GM12878 (cell line): ENCODE measurements at regions of chr2 and their contacts with region 1.

Region 1: GRCh38 chr2:58460670-58461069 is 219.5 kb upstream of the FANCL start:
- DNase-seq: no peak
- ATAC-seq: no peak
- H3K4me3 ChIP-seq: no peak overlapping the region
- H3K27ac ChIP-seq: no peak overlapping the region
- H3K4me1 ChIP-seq: no peaks in the 10 kb centered on the region
- H3K27me3 ChIP-seq: no peaks in the 10 kb centered on the region
- CTCF ChIP-seq: no peak
- EP300 ChIP-seq: no peak
- POLR2A ChIP-seq: no peak
- RAD21 ChIP-seq: no peak

Region 2: GRCh38 chr2:58448065-58448507 is 12.6 kb before region 1 on chr2:
- CTCF ChIA-PET with region 1: interaction called, 4 read pairs
- POLR2A ChIA-PET with region 1: no interaction called
- RAD21 ChIA-PET with region 1: no interaction called
- SMC1A ChIA-PET with region 1: interaction called, 14 read pairs
- in situ Hi-C with region 1: no loop called
- intact Hi-C with region 1: no loop called
- DNase-seq: peak; percentile 46
- ATAC-seq: peak; percentile 67
- H3K4me3 ChIP-seq: no peak overlapping the region
- H3K27ac ChIP-seq: no peak overlapping the region
- H3K4me1 ChIP-seq: no peaks in the 10 kb centered on the region
- H3K27me3 ChIP-seq: no peaks in the 10 kb centered on the region
- CTCF ChIP-seq: peak; percentile 50 to 77 (median 57); a peak in 5 of 6 replicates
- EP300 ChIP-seq: no peak
- POLR2A ChIP-seq: no peak
- RAD21 ChIP-seq: peak; percentile 68